Heart left ventricle (tissue), 16 donors: ENCODE measurements at regions of chr19 and their contacts with region 1.

Region 1: GRCh38 chr19:37217855-37218591 is at the start of gene ZNF383:
- DNase-seq: peak; percentile 87 to 94 (median 91)
- ATAC-seq: peak; percentile 98
- H3K4me3 ChIP-seq: peak within 1 kb of the TSS; percentile 65 to 89 (median 78)
- H3K27ac ChIP-seq: peak within 1 kb of the TSS; percentile 89 to 98 (median 94)
- H3K4me1 ChIP-seq: peaks cover 0 to 26% (median 9%) of the 10 kb centered on the region in 12 donors
- H3K27me3 ChIP-seq: no peaks in the 10 kb centered on the region
- CTCF ChIP-seq: no peak
- POLR2A ChIP-seq: peak in 1 of 2 donors; percentile 28
- total RNA-seq, gene ZNF383: 4.8 to 13.8 (median 9.2) TPM

Region 2: DNA sequence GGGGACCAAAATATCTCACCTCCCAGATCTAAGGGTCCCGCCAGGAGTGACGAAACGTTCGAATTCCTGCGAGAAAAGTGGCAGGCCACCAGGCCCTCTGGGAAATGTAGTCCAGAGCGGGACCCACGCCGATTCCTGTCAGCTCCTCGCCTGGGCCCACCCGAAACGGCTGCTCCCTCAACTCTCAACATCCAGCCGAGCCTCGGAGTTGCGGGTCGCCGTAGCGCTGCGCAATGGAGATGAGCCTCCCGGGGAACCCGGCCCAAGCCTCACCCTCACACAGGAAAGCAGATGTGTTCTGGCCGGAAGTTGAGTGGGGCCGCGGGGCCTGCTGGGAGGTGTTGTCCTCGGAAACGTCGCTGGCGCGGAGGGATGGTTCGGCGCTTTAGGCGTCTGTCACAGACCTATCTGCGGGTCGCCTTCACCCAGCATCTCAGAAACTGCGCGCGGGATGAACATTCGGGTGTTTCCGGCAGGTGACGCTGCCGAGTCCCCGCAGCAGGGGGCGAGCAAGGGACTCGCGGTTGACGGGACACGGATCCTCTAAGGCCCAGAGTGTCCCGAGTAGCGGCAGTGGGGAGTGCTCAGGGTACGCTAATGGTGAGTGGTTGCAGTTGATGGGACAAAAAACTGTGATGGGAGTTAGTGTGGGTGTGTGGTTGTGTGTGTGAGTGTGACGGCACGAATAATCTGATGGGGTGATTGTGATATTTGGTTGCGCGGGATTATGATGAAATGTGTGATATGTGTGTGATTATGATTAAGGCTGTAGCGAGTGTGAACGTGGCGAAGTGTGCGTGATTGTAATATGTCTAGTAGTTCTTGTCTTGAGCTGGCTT is 301.8 kb before region 1 on chr19 and contains the starts of genes ZNF568 and ZNF829:
- intact Hi-C with region 1: loop called in 1 of 10 experiments (anchors 5 kb)
- DNase-seq: peak; percentile 91 to 95 (median 93)
- ATAC-seq: peak; percentile 94 to 99 (median 98)
- H3K4me3 ChIP-seq: peak within 1 kb of the TSS; percentile 60 to 87 (median 80)
- H3K27ac ChIP-seq: peak within 1 kb of the TSS; percentile 80 to 98 (median 97)
- H3K4me1 ChIP-seq: peaks cover 0 to 18% (median 11%) of the 10 kb centered on the region in 12 donors
- H3K27me3 ChIP-seq: no peaks in the 10 kb centered on the region
- CTCF ChIP-seq: peak; percentile 44 to 85 (median 61)
- POLR2A ChIP-seq: no peak
- total RNA-seq, gene ZNF568: 6.6 to 12.1 (median 9.4) TPM
- total RNA-seq, gene ZNF829: 1.3 to 3.5 (median 2.5) TPM

Region 3: DNA sequence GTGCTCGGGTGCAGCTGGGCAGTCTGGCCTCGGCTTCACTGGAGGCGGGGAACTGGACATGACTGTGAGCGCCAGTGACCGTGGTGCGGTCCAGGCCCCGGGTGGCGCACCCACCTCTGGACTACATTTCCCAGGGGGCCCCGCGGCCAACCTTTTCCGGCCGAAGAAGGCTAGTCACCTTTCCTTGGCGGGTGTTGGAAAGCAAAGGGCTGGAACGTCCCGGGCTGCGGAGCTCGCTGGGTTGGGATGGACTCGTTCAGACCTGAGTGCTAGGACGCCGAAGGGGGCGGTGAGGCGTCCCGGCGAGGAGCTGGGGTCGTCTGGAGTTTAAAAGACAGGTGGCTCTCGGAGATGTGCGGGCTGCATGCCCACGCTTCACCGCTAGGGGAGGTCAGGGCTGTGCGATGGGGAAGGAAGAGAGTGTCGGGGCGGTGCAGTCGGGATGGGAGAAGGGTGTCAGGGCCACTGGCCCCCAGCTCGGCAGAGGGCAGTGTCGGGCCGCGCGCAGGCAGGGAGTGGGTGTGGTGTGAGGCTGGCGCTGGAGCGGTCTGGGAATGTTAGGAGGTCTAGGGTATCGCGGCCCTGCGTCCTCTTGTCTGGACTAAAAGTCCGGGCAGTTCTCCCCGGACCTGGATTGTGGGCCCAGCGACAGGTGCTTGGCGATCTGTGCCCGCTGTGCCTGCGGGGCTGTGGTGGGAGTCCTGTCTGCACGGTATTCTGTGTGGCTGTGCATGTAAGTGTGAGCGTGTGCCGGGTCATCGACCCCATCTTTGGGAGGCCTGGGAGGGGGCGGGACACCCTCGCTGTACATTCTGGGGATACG is 244.8 kb before region 1 on chr19:
- intact Hi-C with region 1: loop called in 7 of 10 experiments (anchors 5 to 10 kb)
- DNase-seq: peak; percentile 88 to 94 (median 90)
- ATAC-seq: peak; percentile 99 to 100 (median 100)
- H3K4me3 ChIP-seq: peak overlapping the region; percentile 24 to 91 (median 72)
- H3K27ac ChIP-seq: peak overlapping the region in 11 of 12 donors; percentile 41 to 89 (median 78)
- H3K4me1 ChIP-seq: peaks cover 0 to 21% (median 11%) of the 10 kb centered on the region in 12 donors
- H3K27me3 ChIP-seq: no peaks in the 10 kb centered on the region
- CTCF ChIP-seq: peak; percentile 74 to 97 (median 92)
- POLR2A ChIP-seq: peak in 1 of 2 donors; percentile 28

Region 4: DNA sequence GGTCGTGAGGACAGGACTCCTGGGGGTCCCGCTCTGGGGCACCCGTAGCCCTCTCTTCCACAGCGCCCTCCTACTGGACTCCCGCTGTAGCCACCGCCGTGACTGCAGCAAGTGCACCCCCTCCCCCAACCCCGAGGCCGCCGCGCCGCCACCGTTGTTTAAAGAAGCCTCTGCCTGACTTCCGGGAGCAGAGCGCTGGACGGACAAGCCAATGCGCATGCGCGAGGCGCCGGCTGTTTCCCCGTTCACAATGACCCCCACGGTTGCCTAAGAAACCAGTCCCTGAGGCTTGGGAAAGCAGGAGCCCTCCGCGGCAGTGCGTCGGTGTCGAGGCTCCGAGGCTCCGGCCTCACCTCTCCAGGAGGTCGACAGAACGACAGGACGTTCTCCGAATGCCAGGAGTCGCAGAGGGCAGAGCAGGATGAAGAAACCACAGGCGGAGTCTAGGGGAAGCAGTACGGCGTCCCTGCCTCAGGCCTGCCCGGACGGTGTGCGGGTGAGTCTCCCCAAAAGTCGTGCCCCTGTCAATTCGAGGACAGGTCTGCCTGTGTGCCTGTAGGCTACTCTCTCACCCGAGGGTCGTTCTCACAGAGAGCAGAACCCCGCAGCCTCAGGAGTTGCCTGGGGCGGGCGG is 210.3 kb before region 1 on chr19:
- intact Hi-C with region 1: no loop called
- DNase-seq: peak; percentile 74 to 90 (median 88)
- ATAC-seq: peak; percentile 59 to 97 (median 92)
- H3K4me3 ChIP-seq: peak overlapping the region; percentile 30 to 88 (median 62)
- H3K27ac ChIP-seq: peak overlapping the region in 11 of 12 donors; percentile 16 to 72 (median 52)
- H3K4me1 ChIP-seq: peaks cover 0 to 11% (median 0%) of the 10 kb centered on the region in 12 donors
- H3K27me3 ChIP-seq: no peaks in the 10 kb centered on the region
- CTCF ChIP-seq: peak in 1 of 12 donors; percentile 9
- POLR2A ChIP-seq: no peak

Region 5: GRCh38 chr19:37077934-37078725 is 139.9 kb before region 1 on chr19 and contains the start of gene ZNF420:
- intact Hi-C with region 1: loop called in 1 of 10 experiments (anchors 5 kb)
- DNase-seq: peak; percentile 94 to 97 (median 96)
- ATAC-seq: peak; percentile 99
- H3K4me3 ChIP-seq: peak within 1 kb of the TSS; percentile 62 to 89 (median 78)
- H3K27ac ChIP-seq: peak within 1 kb of the TSS; percentile 45 to 93 (median 86)
- H3K4me1 ChIP-seq: peaks cover 0 to 28% (median 15%) of the 10 kb centered on the region in 12 donors
- H3K27me3 ChIP-seq: no peaks in the 10 kb centered on the region
- CTCF ChIP-seq: peak in 2 of 12 donors; percentile 11 to 14
- POLR2A ChIP-seq: peak in 1 of 2 donors; percentile 64
- total RNA-seq, gene ZNF420: 1.9 to 9.3 (median 7.8) TPM

Region 6: GRCh38 chr19:37148214-37148613 is 69.8 kb before region 1 on chr19:
- intact Hi-C with region 1: no loop called
- DNase-seq: no peak
- ATAC-seq: no peak
- H3K4me3 ChIP-seq: no peak overlapping the region
- H3K27ac ChIP-seq: no peak overlapping the region
- H3K4me1 ChIP-seq: no peaks in the 10 kb centered on the region
- H3K27me3 ChIP-seq: no peaks in the 10 kb centered on the region
- CTCF ChIP-seq: no peak
- POLR2A ChIP-seq: no peak

Region 7: GRCh38 chr19:37172368-37173366 is 45.4 kb before region 1 on chr19 and contains the start of gene ZNF585A:
- intact Hi-C with region 1: loop called in 5 of 10 experiments (anchors 2 to 5 kb)
- DNase-seq: peak; percentile 93 to 95 (median 93)
- ATAC-seq: peak; percentile 100
- H3K4me3 ChIP-seq: peak within 1 kb of the TSS; percentile 49 to 81 (median 68)
- H3K27ac ChIP-seq: peak within 1 kb of the TSS in 11 of 12 donors; percentile 6 to 82 (median 67)
- H3K4me1 ChIP-seq: peaks cover 0 to 14% (median 7%) of the 10 kb centered on the region in 12 donors
- H3K27me3 ChIP-seq: no peaks in the 10 kb centered on the region
- CTCF ChIP-seq: peak in 7 of 12 donors; percentile 21 to 59 (median 34)
- POLR2A ChIP-seq: peak in 1 of 2 donors; percentile 32
- total RNA-seq, gene ZNF585A: 6.5 to 14.8 (median 11.3) TPM

Region 8: DNA sequence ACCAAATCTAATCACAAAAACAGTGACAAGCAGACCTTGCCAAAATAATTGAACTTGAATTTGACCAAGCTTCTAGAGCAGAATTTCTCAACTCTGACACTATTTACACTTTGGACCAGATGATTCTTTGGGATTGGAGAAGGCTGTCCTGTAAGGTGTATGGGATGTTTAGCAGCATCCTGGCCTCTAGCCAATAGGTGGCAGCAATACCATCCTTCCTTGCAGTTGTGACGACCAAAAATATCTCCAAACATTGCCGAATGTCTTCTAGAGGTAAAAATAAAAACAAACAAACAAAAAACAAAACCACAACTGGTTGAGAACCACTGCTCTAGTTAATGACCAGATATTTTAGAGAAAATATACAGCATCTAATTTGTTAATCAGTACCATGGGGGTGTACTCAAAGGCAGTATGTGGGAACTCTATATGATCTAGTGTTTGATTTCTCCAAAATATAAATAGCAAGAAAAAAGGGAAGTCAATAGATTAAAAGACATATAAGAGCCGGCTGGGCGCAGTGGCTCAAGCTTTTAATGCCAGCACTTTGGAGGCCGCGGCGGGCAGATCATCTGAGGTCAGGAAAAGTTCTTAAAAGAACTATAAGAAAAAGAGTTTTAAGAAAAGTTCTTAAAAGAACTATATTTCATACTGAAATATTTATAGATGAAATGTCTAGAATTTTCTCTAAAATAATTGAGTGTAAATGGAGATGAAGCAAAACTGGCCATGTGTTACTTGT is 92.0 kb after region 1 on chr19:
- intact Hi-C with region 1: loop called in 2 of 10 experiments (anchors 10 kb)
- DNase-seq: no peak
- ATAC-seq: no peak
- H3K4me3 ChIP-seq: no peak overlapping the region
- H3K27ac ChIP-seq: no peak overlapping the region
- H3K4me1 ChIP-seq: peaks cover 0 to 10% (median 2%) of the 10 kb centered on the region in 12 donors
- H3K27me3 ChIP-seq: no peaks in the 10 kb centered on the region
- CTCF ChIP-seq: peak in 1 of 12 donors; percentile 12
- POLR2A ChIP-seq: no peak

Region 9: DNA sequence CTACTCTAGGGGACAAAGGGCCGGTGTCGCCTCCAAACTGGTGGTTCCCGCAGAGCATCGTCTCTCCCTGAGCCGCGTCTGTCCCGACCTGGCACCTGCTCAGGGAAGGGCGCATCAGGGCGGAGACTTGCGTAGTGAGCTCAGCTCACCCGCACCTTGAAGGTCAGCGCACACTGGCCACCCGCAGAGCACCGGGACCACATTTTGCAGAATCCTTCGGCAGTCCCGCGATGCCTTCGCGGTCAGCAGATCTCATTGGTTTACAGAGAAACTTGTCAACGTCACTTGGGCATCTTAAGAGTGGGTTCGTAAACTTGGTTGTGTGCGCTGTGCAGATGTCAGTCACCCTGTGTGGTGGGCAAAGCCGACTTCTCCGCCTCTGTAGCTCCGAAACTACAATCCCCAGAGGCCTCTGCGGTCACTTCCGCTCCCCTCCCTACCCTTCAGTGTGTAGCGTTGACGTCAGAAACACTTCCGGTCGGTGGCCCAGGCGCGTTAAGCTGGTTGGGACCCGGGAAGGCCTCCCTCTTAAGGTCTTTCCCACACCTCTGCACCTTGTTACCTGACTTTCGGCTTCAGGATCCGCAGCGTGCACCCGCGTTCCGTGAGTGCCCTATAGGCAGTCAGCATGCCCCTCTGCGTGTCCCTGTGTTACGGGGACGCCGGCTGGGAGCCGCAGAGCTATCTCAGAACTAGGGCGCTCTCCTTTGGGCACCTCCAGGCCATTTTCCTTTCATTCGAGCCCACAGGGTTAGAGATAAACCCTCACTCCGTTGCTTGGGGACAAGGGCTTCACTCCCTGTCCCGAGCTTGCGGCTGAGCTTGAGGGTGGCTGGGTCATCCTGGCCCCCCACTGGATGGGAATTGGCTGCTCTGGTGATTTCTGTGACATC is 116.4 kb after region 1 on chr19:
- intact Hi-C with region 1: loop called in 1 of 10 experiments (anchors 10 kb)
- DNase-seq: peak; percentile 93 to 96 (median 95)
- ATAC-seq: peak; percentile 98 to 99 (median 99)
- H3K4me3 ChIP-seq: peak overlapping the region; percentile 62 to 99 (median 84)
- H3K27ac ChIP-seq: peak overlapping the region; percentile 19 to 95 (median 87)
- H3K4me1 ChIP-seq: peaks cover 3 to 51% (median 27%) of the 10 kb centered on the region in 12 donors
- H3K27me3 ChIP-seq: no peaks in the 10 kb centered on the region
- CTCF ChIP-seq: no peak
- POLR2A ChIP-seq: peak in 1 of 2 donors; percentile 82

Region 10: DNA sequence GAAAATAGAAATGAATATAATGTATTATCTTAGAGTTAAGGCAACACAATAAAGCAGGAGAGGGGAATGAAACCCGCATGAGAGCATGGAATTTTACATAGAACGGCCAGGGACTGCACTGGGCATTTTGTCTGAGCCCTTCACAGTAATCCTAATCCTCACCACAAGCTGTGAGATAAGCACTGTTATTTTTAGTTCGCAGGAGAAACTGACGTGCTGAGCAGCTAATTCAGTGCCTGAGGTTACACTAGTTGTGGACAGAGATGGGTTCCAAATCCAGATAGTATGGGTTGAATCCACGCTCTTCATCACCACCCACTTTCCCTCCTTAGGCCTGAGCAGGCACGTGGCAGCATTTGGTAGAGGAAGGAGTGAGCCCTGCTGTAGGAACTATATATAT is 128.1 kb after region 1 on chr19:
- intact Hi-C with region 1: no loop called
- DNase-seq: no peak
- ATAC-seq: peak; percentile 53 to 83 (median 74)
- H3K4me3 ChIP-seq: no peak overlapping the region
- H3K27ac ChIP-seq: peak overlapping the region in 8 of 12 donors; percentile 31 to 69 (median 52)
- H3K4me1 ChIP-seq: peaks cover 0 to 22% (median 3%) of the 10 kb centered on the region in 12 donors
- H3K27me3 ChIP-seq: no peaks in the 10 kb centered on the region
- CTCF ChIP-seq: no peak
- POLR2A ChIP-seq: no peak